PC-9 (cell line): ENCODE measurements at regions of chr14 and their contacts with region 1.

Region 1: DNA sequence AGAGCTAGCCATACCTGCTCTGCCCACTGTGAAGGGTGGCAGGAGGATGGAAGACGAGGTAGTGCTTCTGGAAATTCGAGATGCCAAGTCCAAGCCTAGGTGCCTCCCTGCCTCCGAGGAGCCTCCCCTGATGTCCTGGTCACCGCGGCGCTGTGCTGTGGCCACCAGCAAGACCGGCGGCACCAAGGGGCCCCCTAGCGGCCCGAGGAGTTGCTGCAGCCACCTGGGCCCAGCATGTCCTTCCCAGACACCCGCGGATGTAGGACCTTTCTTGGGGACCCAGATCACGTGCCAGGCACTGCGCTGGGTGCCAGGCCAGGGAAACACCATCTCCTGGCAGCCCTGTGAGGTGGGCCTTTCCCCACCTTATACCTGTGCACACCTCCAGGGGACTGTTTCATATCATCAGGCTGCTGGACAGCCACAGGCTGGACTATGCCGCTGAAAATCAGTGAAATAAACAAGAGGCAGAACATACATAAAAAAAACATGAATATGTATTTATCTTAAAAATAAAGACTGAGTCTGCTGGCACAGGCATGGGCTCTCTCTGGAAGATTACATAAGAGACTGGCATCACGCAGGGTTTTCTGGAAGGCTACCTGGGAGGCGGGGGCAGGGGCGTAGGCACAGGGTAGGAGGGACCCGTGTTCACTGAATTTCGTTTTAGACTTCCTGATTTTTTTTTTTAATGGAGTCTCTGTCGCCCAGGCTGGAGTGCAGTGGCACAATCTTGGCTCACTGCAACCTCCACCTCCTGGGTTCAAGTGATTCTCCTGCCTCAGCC is 15.9 kb upstream of the HHIPL1 start:
- DNase-seq: peak; percentile 47 to 55
- H3K4me3 ChIP-seq: no peak overlapping the region
- H3K27ac ChIP-seq: no peak overlapping the region
- H3K4me1 ChIP-seq: no peaks in the 10 kb centered on the region
- H3K27me3 ChIP-seq: no peaks in the 10 kb centered on the region
- CTCF ChIP-seq: peak; percentile 92

Region 2: DNA sequence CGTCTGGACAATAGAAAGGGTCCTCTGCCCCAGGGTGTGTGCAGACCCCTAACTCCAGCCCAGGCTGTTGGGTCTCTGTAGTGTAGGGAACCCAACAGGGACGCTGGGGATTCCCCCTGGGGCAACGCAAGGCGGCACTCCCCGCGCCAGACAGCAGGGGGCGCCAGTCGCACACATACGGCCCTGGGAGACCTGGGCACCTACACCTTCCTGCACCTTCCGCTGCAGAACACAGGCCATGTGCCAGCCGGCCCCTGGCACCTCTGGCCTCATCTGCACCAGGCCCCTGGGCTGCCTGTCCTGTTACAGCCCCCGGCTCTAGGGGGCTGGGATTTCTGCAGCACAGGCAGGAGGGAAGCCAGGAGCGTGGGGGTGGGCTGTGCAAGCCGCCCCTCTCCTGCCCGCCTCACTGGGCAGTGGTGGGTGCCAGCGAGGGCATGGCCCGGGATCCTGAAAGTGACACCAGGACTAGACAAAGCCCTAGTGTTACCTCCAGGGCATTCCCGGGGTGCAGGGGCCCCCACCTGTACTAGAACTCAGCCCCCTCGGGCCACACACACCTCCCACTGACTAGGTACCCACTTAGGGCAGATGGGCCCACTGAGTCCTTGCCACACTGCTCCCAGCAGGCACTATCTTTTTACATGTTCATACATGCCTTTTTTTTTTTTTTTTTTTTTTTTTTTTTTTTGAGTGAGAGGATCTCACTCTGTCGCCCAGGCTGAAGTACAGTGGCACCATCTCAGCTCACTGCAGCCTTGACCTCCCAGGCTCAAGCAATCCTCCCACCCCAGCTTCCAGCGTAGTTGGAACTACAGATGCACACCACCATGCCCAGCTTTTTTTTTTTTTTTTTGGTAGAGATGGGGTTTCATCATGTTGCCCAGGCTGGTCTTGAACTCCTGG is 110.3 kb before region 1 on chr14:
- CTCF ChIA-PET with region 1: no interaction called
- POLR2A ChIA-PET with region 1: no interaction called
- intact Hi-C with region 1: loop called (anchors 2 kb)
- DNase-seq: peak; percentile 35 to 51
- H3K4me3 ChIP-seq: no peak overlapping the region
- H3K27ac ChIP-seq: no peak overlapping the region
- H3K4me1 ChIP-seq: no peaks in the 10 kb centered on the region
- H3K27me3 ChIP-seq: no peaks in the 10 kb centered on the region
- CTCF ChIP-seq: peak; percentile 84